MCF 10A (cell line): ENCODE measurements at regions of chr12 and their contacts with region 1.

Region 1: DNA sequence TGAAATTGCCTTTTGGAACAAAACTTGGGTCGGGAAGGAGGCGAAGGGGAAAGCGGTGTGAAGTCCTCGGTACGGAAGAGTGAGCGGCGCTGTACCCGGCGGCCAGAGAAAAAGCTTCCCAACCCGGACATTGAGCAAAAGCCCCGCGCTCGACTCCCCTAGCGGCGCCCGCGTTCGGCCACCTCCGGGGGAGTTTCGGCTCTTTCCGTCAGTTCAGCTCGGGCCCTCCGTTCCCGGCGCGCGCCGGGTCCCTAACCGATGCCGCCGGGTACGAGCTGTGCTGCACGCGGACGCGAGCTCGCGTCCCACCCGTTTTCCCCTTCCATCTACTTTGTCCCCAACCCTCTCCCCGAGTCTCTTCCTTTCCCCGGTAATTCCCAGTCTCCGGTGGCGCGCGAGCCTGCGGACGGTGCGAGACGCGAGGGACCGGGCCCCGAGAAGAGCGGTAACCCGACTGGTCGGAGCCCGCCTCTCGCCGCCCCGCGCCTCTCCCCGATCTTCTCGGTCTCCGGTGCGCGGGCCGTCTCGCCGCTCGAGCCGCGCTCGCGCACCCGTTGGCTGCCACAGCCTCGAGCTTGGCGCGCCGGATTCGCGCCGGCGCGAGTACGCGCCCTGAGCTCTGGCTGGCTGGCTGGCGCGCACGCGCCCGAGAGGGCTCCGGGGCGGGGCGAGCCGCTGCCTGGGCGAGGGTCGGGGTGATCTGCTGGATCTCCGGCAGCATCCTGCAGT is 446 bp upstream of the SPATS2 start:
- DNase-seq: peak; percentile 89
- H3K4me3 Mint-ChIP-seq: peak overlapping the region; percentile 80
- H3K27ac Mint-ChIP-seq: peak overlapping the region; percentile 33
- H3K4me1 Mint-ChIP-seq: peaks cover 24% of the 10 kb centered on the region
- H3K27me3 Mint-ChIP-seq: no peaks in the 10 kb centered on the region
- CTCF ChIP-seq: peak; percentile 6

Region 2: GRCh38 chr12:49110464-49111155 is 256.2 kb before region 1 on chr12 and contains the start of gene LMBR1L:
- CTCF ChIA-PET with region 1: no interaction called
- POLR2A ChIA-PET with region 1: no interaction called
- intact Hi-C with region 1: no loop called
- DNase-seq: peak; percentile 99
- H3K4me3 Mint-ChIP-seq: peak within 1 kb of the TSS; percentile 86
- H3K27ac Mint-ChIP-seq: peak within 1 kb of the TSS; percentile 97
- H3K4me1 Mint-ChIP-seq: peaks cover 18% of the 10 kb centered on the region
- H3K27me3 Mint-ChIP-seq: no peaks in the 10 kb centered on the region
- CTCF ChIP-seq: peak; percentile 14
- total RNA-seq, gene LMBR1L: 27.8 and 35.7 TPM in 2 replicates

Region 3: GRCh38 chr12:49195736-49196135 is 171.1 kb before region 1 on chr12:
- CTCF ChIA-PET with region 1: no interaction called
- POLR2A ChIA-PET with region 1: no interaction called
- intact Hi-C with region 1: no loop called
- DNase-seq: no peak
- H3K4me3 Mint-ChIP-seq: no peak overlapping the region
- H3K27ac Mint-ChIP-seq: no peak overlapping the region
- H3K4me1 Mint-ChIP-seq: peaks cover 6% of the 10 kb centered on the region
- H3K27me3 Mint-ChIP-seq: peaks cover 22% of the 10 kb centered on the region
- CTCF ChIP-seq: no peak

Region 4: DNA sequence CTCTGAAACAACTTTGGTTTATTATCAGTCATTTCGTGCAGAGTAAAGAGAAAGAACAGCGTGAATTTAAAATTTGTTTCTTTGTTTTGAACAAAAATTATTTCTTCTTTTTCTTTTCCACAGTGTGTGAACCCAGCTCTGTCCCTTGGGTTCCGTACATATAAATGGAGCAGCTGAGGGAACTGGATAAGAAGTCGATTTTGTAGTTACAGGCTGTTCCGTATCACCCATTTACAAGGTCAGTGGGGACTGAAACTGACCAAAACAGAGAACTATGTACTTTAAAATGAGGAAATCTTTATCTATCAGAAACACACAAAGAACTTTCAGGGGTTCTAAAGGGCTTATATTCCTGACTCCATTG is 110.6 kb before region 1 on chr12:
- CTCF ChIA-PET with region 1: no interaction called
- POLR2A ChIA-PET with region 1: no interaction called
- intact Hi-C with region 1: no loop called
- DNase-seq: no peak
- H3K4me3 Mint-ChIP-seq: no peak overlapping the region
- H3K27ac Mint-ChIP-seq: peak overlapping the region; percentile 15
- H3K4me1 Mint-ChIP-seq: peaks cover 17% of the 10 kb centered on the region
- H3K27me3 Mint-ChIP-seq: no peaks in the 10 kb centered on the region
- CTCF ChIP-seq: no peak

Region 5: DNA sequence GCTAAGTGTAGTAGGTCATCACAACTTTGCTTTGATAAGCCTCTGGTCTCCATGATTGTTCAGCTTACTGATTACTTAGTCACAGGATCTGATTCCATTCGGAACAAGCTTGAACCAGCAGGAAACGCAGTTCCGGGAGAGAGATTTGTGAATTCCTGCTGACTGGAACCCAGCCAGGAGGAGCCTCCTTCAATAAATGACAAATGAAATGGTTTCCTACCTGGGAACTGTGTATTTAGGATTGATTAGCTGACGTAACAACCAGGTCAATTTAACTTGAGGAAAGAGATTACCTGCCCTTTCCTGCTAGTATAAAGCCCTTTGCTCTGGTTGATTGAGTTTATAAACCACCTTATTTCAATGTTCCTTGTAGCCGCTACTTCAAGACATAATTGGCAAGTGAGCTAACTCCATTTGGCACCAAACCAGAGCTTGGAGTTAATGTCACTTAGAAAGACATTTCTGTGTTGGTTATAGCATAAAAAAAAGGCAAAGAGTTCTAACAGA is 136.9 kb after region 1 on chr12:
- CTCF ChIA-PET with region 1: no interaction called
- POLR2A ChIA-PET with region 1: interaction called, 32 read pairs
- intact Hi-C with region 1: no loop called
- DNase-seq: peak; percentile 69
- H3K4me3 Mint-ChIP-seq: peak overlapping the region; percentile 40
- H3K27ac Mint-ChIP-seq: peak overlapping the region; percentile 54
- H3K4me1 Mint-ChIP-seq: peaks cover 15% of the 10 kb centered on the region
- H3K27me3 Mint-ChIP-seq: no peaks in the 10 kb centered on the region
- CTCF ChIP-seq: no peak